ENCODE measurements at regions of chr14 and their contacts with region 1.

Region 1: GRCh38 chr14:59964251-59965007 is 44.5 kb downstream of the LRRC9 start:
- DNase-seq: no peak
- H3K27ac ChIP-seq: no peak overlapping the region
- CTCF ChIP-seq: no peak

Region 2: GRCh38 chr14:59543873-59544272 is 420.6 kb before region 1 on chr14:
- CTCF ChIA-PET with region 1: no interaction called
- POLR2A ChIA-PET with region 1: no interaction called
- DNase-seq: no peak
- H3K27ac ChIP-seq: no peak overlapping the region
- CTCF ChIP-seq: no peak

Region 3: GRCh38 chr14:59583755-59584154 is 380.7 kb before region 1 on chr14:
- CTCF ChIA-PET with region 1: no interaction called
- POLR2A ChIA-PET with region 1: no interaction called
- DNase-seq: peak; percentile 3
- H3K27ac ChIP-seq: no peak overlapping the region
- CTCF ChIP-seq: no peak

Region 4: GRCh38 chr14:60184146-60184904 is 219.9 kb after region 1 on chr14:
- CTCF ChIA-PET with region 1: interaction called, 15 read pairs
- POLR2A ChIA-PET with region 1: no interaction called
- DNase-seq: no peak
- H3K27ac ChIP-seq: no peak overlapping the region
- CTCF ChIP-seq: peak; percentile 69